Heart left ventricle (tissue), 16 donors: ENCODE measurements at regions of chr11 and their contacts with region 1.

Region 1: DNA sequence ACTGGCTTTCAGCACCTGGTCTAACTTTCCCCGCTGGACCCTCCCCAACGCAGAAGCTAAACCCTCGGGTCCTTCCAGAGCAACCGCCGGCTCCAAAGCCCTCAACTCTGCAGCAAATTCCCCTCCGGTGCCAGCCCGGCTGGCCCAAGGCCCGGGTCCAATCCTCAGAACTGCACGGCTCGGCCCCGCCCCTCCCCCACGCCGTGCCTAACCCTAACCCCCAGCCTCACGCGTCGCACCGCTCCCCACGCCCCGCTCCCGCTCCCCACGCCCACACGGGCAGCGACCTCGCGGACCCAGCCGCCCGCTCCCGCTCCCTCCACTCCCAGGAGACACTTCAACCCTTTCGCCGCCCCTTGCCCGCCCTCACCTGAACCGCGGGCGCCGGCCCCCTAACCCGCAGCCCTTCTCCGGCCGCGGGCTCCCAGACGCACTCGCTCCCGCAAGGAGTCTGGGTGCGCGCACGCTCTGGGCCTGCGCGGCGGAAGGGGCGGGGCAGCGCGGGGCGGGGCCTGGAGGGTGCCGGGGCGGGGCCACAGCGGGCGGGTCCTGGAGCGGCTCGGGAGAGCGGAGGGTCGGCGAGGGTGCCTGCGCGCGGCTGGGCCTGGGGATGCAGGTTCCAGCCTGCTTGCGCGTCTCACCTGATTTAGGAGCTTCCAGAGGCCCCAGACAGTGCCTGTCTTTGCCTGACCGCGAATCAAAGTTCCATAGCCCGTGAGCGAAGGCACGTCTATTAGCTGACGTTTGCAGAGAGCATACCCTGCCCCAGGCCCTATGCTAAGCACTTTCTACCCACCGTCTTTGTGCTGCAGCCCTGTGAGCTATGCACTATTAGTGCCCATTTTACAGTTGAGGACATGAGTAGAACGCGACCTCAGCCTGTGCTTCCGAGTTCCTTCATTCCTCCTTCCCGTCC is at the start of gene NFRKB:
- DNase-seq: peak; percentile 84 to 95 (median 90)
- ATAC-seq: peak; percentile 94 to 100 (median 99)
- H3K4me3 ChIP-seq: peak within 1 kb of the TSS; percentile 61 to 97 (median 82)
- H3K27ac ChIP-seq: peak within 1 kb of the TSS in 11 of 12 donors; percentile 33 to 87 (median 80)
- H3K4me1 ChIP-seq: peaks cover 0 to 19% (median 11%) of the 10 kb centered on the region in 12 donors
- H3K27me3 ChIP-seq: no peaks in the 10 kb centered on the region
- CTCF ChIP-seq: peak in 2 of 12 donors; percentile 37 to 38
- POLR2A ChIP-seq: peak in 1 of 2 donors; percentile 80
- total RNA-seq, gene NFRKB: 6.7 to 23.1 (median 14.1) TPM

Region 2: GRCh38 chr11:129785383-129786111 is 109.8 kb before region 1 on chr11:
- intact Hi-C with region 1: no loop called
- DNase-seq: no peak
- ATAC-seq: no peak
- H3K4me3 ChIP-seq: no peak overlapping the region
- H3K27ac ChIP-seq: no peak overlapping the region
- H3K4me1 ChIP-seq: peaks cover 0 to 6% (median 0%) of the 10 kb centered on the region in 12 donors
- H3K27me3 ChIP-seq: peaks cover 0 to 11% (median 0%) of the 10 kb centered on the region in 9 donors
- CTCF ChIP-seq: peak in 3 of 12 donors; percentile 16 to 27 (median 26)
- POLR2A ChIP-seq: no peak

Region 3: GRCh38 chr11:130181295-130182272 is 286.2 kb after region 1 on chr11:
- intact Hi-C with region 1: no loop called
- DNase-seq: peak in 2 of 5 donors; percentile 45 to 73
- ATAC-seq: peak; percentile 67 to 88 (median 82)
- H3K4me3 ChIP-seq: no peak overlapping the region
- H3K27ac ChIP-seq: peak overlapping the region; percentile 7 to 87 (median 76)
- H3K4me1 ChIP-seq: peaks cover 4 to 50% (median 33%) of the 10 kb centered on the region in 12 donors
- H3K27me3 ChIP-seq: no peaks in the 10 kb centered on the region
- CTCF ChIP-seq: no peak
- POLR2A ChIP-seq: no peak

Region 4: DNA sequence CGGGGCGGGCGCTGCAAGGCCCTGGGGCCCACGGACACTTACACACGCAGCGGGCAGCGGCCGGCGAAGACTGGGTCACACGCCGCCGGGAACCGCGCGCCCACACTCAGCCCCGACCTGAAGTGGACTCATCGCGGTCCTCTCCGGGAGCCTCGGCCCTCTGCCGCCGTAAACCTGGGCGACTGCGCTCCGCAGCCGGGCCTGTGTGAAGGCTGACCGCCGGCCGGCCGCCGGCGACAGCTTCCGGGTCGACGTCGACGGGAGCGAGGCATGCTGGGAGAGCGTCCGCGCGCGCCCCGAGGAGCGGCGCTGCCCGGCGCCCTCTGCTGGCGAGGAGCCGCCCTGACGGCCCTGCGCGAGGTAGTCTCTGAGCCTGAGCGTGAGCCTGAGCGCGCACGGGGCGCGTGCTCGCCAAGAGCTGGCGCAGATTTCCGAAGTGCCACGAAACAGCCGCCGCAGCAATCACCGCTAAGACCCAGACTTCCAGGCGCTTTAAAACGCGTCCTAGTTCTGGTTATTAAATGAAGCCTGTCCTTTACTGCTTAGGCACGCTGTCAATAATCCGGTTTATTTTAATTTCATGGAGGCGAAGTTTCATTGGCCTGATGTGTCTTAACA is 1021.0 kb after region 1 on chr11 and contains the start of gene SNX19:
- intact Hi-C with region 1: loop called in 1 of 10 experiments (anchors 10 kb)
- DNase-seq: peak; percentile 93 to 97 (median 94)
- ATAC-seq: peak; percentile 95 to 99 (median 98)
- H3K4me3 ChIP-seq: peak within 1 kb of the TSS; percentile 59 to 99 (median 94)
- H3K27ac ChIP-seq: peak within 1 kb of the TSS in 11 of 12 donors; percentile 74 to 94 (median 88)
- H3K4me1 ChIP-seq: peaks cover 0 to 42% (median 26%) of the 10 kb centered on the region in 12 donors
- H3K27me3 ChIP-seq: no peaks in the 10 kb centered on the region
- CTCF ChIP-seq: peak; percentile 93 to 100 (median 98)
- POLR2A ChIP-seq: peak; percentile 57 to 88
- total RNA-seq, gene SNX19: 35.3 to 121 (median 58.3) TPM